ENCODE measurements at regions of chr9 and their contacts with region 1.

Region 1: DNA sequence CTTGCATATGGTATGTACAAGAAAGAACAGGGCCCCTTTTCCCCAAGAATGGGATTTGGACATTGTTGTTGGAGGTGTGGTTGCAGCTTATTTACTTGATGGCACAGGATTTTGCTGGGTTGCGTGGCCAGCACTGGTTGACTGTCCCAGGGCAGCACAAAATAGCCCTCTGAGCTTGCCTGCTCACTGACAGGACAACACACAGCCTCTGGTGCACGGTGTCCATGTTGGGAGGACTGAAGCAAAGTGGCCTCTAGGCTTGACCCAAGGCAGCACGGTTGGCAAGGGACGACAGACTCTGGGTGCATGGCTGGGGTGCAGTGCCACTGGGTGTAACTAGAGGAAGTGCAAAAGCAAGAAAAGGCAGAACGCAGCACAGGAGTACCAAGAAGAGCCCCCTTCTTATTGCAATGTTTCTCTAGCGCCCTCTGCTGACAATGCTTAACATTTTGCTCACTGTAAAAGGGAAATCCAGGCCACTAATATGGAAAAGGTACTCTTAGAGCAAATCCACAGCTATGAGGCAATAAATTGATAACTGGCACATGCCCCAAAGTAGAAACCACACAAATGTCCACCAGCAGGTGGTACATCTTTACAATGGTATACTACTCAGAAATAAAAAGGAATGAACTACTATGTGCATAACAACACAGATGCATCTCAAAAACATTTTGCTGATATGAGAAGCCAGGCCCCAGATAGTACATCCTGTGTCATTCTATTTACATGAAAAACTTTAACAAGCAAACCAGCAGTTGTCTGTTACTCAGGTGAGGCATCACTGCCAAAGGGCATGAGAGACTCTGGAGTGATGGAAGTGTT is 47.4 kb upstream of the BARX1 start:
- DNase-seq: peak in 1 of 5 donors; percentile 13
- ATAC-seq: peak in 2 of 4 donors; percentile 24 to 28
- H3K4me3 ChIP-seq: no peak overlapping the region
- H3K27ac ChIP-seq: no peak overlapping the region
- H3K4me1 ChIP-seq: no peaks in the 10 kb centered on the region
- H3K27me3 ChIP-seq: peaks cover 0 to 11% (median 0%) of the 10 kb centered on the region in 9 donors
- CTCF ChIP-seq: peak; percentile 33 to 62 (median 48)
- POLR2A ChIP-seq: no peak

Region 2: GRCh38 chr9:93682232-93682968 is 320.1 kb before region 1 on chr9:
- intact Hi-C with region 1: loop called in 4 of 10 experiments (anchors 1 to 2 kb)
- DNase-seq: peak; percentile 37 to 82 (median 52)
- ATAC-seq: peak in 3 of 4 donors; percentile 45 to 68 (median 57)
- H3K4me3 ChIP-seq: no peak overlapping the region
- H3K27ac ChIP-seq: no peak overlapping the region
- H3K4me1 ChIP-seq: peaks cover 0 to 5% (median 0%) of the 10 kb centered on the region in 12 donors
- H3K27me3 ChIP-seq: no peaks in the 10 kb centered on the region
- CTCF ChIP-seq: peak; percentile 60 to 82 (median 76)
- POLR2A ChIP-seq: no peak

Region 3: DNA sequence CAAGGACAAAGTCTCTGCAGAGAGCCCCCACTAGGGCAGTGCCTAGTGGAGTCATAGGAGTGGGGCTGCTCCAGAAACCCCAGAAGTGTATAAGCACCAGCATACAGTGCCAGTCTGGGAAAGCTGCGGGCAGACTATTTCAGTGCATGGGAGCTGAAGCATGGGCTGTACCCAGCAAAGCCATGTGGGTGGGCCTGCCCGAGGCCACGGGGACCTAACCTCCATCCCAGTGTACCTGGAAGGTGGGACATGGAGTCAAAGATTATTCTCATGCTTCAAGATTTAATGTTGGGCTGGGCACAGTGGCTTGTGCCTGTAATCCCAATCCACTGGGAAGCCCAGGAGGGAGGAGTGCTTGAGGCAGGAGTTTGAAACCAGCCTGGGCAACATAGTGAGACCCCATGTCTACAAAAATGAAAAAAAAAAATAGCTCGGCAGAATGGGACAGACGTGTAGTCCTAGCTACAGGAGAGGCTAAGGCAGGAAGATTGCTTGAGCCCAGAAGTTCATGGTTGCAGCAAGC is 118.4 kb after region 1 on chr9:
- intact Hi-C with region 1: no loop called
- DNase-seq: no peak
- ATAC-seq: no peak
- H3K4me3 ChIP-seq: no peak overlapping the region
- H3K27ac ChIP-seq: no peak overlapping the region
- H3K4me1 ChIP-seq: no peaks in the 10 kb centered on the region
- H3K27me3 ChIP-seq: no peaks in the 10 kb centered on the region
- CTCF ChIP-seq: no peak
- POLR2A ChIP-seq: no peak

Region 4: DNA sequence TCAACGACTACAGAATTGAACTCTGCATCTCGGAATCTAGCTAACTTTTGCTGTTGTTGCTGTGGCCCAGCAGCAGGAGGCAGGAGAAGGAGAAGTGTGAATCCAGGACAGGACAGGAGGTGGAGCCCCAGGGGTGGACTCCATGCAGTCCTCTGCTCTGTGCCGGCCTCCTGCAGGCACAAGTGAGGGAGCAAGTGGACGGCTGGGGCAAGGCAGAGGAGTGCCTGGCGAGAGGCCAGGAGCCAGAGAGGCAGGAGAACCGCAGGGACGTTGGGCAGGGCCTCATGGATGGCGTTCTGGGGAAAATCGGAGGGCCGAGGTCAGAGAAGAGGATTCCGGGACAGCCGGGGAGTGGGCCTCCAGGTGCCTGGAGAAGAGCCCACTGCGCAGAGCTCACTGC is 1100.9 kb after region 1 on chr9:
- intact Hi-C with region 1: no loop called
- DNase-seq: peak in 2 of 5 donors; percentile 66 to 68
- ATAC-seq: peak; percentile 7 to 41 (median 34)
- H3K4me3 ChIP-seq: no peak overlapping the region
- H3K27ac ChIP-seq: peak overlapping the region in 10 of 12 donors; percentile 2 to 63 (median 30)
- H3K4me1 ChIP-seq: peaks cover 0 to 79% (median 39%) of the 10 kb centered on the region in 12 donors
- H3K27me3 ChIP-seq: no peaks in the 10 kb centered on the region
- CTCF ChIP-seq: peak in 2 of 12 donors; percentile 19 to 24
- POLR2A ChIP-seq: no peak

Measured in heart left ventricle (tissue), 16 donors.